ENCODE measurements at regions of chr10 and their contacts with region 1.

Region 1: DNA sequence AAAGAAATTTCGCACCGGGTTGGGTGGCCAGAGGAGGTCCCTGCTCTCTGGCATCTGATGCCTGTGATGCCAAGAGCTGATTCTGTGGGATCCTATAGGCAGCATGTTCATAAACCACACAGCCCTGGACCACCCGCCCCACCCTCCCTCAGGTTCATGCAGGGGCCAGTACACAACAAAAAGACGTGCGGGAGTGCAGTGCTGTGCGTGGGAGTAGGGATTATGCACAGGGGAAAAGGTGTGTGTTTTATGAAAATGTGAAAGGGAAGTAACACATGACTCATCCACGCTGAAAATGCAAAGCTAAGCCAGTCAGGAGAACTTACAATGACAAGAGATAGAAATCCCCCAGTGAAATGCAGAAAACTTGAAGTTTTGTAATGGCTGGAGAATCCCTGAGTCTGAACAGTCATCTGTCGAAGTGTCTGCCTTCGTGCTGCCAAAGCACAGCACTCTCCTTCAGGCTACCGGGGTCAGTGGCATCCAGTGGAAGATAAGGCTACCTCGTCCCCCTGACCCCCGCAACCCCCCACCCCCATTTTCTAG is 1.1 kb downstream of the KIAA1217 start:
- DNase-seq: peak in 1 of 2 donors; percentile 79
- H3K4me3 ChIP-seq: peak overlapping the region; percentile 47 to 54
- H3K27ac ChIP-seq: peak overlapping the region; percentile 82
- H3K4me1 ChIP-seq: peaks cover 38% of the 10 kb centered on the region
- H3K27me3 ChIP-seq: no peaks in the 10 kb centered on the region
- CTCF ChIP-seq: no peak
- POLR2A ChIP-seq: no peak

Region 2: GRCh38 chr10:24128066-24128730 is 81.8 kb before region 1 on chr10:
- intact Hi-C with region 1: no loop called
- DNase-seq: no peak
- H3K4me3 ChIP-seq: no peak overlapping the region
- H3K27ac ChIP-seq: no peak overlapping the region
- H3K4me1 ChIP-seq: no peaks in the 10 kb centered on the region
- H3K27me3 ChIP-seq: no peaks in the 10 kb centered on the region
- CTCF ChIP-seq: no peak
- POLR2A ChIP-seq: no peak

Region 3: DNA sequence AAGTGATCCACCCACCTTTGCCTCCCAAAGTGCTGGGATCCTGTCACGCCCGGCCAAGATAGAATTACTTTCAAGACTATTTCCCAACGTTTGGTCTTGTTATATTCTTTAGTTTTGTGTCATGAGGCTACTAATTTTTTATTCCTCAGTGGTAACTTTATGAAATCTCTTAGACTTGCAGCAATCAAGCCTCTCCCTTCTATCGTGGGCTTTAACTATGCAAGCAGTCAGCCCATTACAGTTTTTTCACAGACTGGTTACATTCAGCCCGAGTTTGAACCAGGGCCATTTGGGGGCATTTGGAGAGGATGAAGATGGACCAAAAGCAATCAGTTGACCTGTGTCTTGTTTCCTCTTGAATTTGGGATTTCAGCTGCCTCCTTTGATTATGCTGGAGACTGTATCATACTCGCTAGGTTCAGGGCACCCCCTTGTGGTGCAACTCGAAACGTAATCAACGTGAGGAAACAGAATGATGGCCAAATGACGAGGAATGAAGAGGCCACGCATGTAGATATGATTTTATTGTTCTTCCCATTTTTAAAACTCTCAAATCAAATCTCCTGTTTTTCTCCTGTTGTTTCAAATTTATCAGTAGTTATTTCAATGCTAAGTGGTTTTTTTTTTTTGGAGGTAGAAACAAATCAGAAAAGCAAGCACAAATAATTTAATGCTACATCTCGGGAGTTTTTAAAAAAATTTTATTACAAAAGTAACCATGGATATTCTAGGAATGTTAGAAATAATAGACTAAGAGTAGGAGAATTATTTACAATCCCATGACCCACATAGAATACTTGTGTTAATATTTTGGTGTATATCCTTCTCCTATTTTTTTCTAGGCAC is 150.5 kb after region 1 on chr10:
- intact Hi-C with region 1: loop called (anchors 10 kb)
- DNase-seq: no peak
- H3K4me3 ChIP-seq: no peak overlapping the region
- H3K27ac ChIP-seq: no peak overlapping the region
- H3K4me1 ChIP-seq: peaks cover 5% of the 10 kb centered on the region
- H3K27me3 ChIP-seq: no peaks in the 10 kb centered on the region
- CTCF ChIP-seq: peak; percentile 49 to 67 (median 51)
- POLR2A ChIP-seq: no peak